Heart right ventricle (tissue), 16 donors: ENCODE measurements at regions of chr10 and their contacts with region 1.

Region 1: GRCh38 chr10:68792115-68792514 is 35.2 kb upstream of the STOX1 start:
- DNase-seq: no peak
- ATAC-seq: no peak
- H3K4me3 ChIP-seq: no peak overlapping the region
- H3K27ac ChIP-seq: no peak overlapping the region
- H3K4me1 ChIP-seq: no peaks in the 10 kb centered on the region
- H3K27me3 ChIP-seq: no peaks in the 10 kb centered on the region
- CTCF ChIP-seq: peak in 6 of 9 donors; percentile 16 to 36 (median 24)

Region 2: DNA sequence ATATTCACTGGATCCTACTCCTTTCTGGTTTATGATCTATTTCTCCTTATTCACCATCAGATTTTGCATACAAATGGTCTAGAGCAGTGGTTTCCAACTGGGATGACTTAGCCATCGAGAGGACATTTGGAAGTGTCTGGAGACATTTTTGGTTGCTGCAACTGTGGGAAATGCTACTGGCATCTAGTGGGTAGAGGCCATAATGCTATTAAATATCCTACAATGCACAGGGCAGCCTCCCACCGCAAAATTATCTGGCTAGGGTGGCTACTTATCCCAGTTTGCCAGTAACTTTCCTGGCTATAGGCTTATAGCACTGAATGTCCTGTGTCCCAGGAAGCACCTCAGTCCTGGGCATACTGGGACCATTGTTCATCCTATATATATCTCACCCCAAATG is 87.5 kb after region 1 on chr10:
- intact Hi-C with region 1: loop called in 1 of 10 experiments (anchors 10 kb)
- DNase-seq: no peak
- ATAC-seq: no peak
- H3K4me3 ChIP-seq: no peak overlapping the region
- H3K27ac ChIP-seq: no peak overlapping the region
- H3K4me1 ChIP-seq: no peaks in the 10 kb centered on the region
- H3K27me3 ChIP-seq: no peaks in the 10 kb centered on the region
- CTCF ChIP-seq: no peak

Region 3: DNA sequence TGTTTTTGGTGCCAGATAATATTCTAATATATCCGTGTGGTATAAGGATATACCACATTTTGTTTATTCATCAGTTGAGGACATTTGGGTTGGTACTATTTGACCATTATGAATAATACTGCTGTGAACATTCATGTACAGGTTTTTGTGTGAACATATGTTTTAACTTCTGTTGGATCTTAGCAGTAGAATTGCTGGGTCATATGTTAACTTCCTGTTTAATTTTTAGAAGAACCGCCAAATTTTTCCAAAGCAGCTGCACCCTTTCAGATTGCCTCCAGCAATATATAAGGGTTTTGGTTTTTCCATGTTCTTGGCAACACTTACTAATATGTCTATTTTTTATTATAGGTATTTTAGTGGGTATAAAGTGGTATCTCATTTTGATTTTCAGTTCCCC is 354.6 kb after region 1 on chr10:
- intact Hi-C with region 1: no loop called
- DNase-seq: no peak
- ATAC-seq: no peak
- H3K4me3 ChIP-seq: no peak overlapping the region
- H3K27ac ChIP-seq: no peak overlapping the region
- H3K4me1 ChIP-seq: peaks cover 0 to 13% (median 0%) of the 10 kb centered on the region in 9 donors
- H3K27me3 ChIP-seq: no peaks in the 10 kb centered on the region
- CTCF ChIP-seq: no peak